ENCODE measurements at regions of chr3 and their contacts with region 1.

Region 1: GRCh38 chr3:196684548-196685407 is 27.3 kb downstream of the CEP19 start:
- DNase-seq: peak; percentile 64 to 87
- H3K4me3 ChIP-seq: peak overlapping the region in 2 of 4 donors; percentile 7 to 8
- H3K27ac ChIP-seq: no peak overlapping the region
- H3K4me1 ChIP-seq: peaks cover 5 to 11% (median 8%) of the 10 kb centered on the region in 4 donors
- H3K27me3 ChIP-seq: no peaks in the 10 kb centered on the region
- CTCF ChIP-seq: peak in 5 of 7 experiments; percentile 75 to 91 (median 84)
- EP300 ChIP-seq: no peak
- POLR2A ChIP-seq: no peak

Region 2: DNA sequence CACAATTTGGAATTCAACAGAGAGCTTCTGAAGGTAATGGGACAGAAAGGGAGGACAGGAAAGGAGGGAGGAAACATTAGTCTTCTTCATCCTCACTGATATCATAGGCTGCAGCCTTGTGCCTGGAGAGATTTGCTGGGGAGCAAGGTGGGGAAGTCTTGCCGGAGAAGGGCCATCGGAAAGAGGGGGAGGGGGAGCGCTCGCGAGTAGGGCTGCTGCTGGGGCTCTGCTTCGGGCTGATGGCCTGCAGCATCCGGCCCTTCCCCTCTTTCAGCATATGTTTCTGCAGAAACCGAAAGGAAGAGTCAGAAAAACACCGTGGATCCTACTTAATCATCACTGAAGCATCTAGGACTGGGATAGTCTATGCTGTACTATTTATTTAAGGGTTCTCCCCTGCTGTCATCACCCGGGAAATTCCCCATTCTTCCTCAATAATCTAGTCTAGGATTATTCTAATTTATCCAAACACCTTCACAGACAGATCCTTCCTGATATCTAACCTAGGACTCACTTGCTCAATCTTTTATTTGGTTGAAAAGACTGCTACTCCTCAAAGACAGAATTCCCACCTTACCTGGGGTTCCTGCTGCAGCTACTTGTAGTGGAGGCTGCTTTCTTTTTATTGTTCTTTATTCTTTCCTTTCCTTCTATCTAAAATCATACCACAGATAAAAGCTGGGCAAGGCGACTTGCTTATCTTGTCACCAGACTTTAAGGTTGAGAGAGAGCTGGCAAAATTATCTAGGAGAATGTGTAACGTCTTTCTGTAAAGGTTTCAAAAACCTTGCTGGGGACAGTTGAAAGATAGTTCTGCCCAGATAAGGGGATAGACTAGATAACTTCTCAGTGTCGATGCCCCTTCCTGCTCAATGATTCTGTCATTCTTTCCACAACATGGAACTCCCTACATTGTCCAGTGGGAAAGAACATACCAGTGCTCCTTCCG is 445.9 kb before region 1 on chr3:
- intact Hi-C with region 1: no loop called
- DNase-seq: no peak
- H3K4me3 ChIP-seq: no peak overlapping the region
- H3K27ac ChIP-seq: no peak overlapping the region
- H3K4me1 ChIP-seq: no peaks in the 10 kb centered on the region
- H3K27me3 ChIP-seq: no peaks in the 10 kb centered on the region
- CTCF ChIP-seq: no peak
- EP300 ChIP-seq: no peak
- POLR2A ChIP-seq: no peak

Region 3: GRCh38 chr3:196609343-196609775 is 75.4 kb before region 1 on chr3:
- intact Hi-C with region 1: loop called (anchors 5 kb)
- DNase-seq: peak; percentile 94
- H3K4me3 ChIP-seq: no peak overlapping the region
- H3K27ac ChIP-seq: peak overlapping the region in 3 of 5 donors; percentile 40 to 69 (median 49)
- H3K4me1 ChIP-seq: peaks cover 10 to 36% (median 27%) of the 10 kb centered on the region in 4 donors
- H3K27me3 ChIP-seq: peaks cover 0 to 5% (median 0%) of the 10 kb centered on the region in 3 donors
- CTCF ChIP-seq: peak in 5 of 7 experiments; percentile 55 to 87 (median 81)
- EP300 ChIP-seq: no peak
- POLR2A ChIP-seq: no peak